Right ventricle myocardium superior (tissue), 1 donor: ENCODE measurements at regions of chr19 and their contacts with region 1.

Region 1: GRCh38 chr19:40055832-40056504 is at the start of gene ZNF780B:
- DNase-seq: peak; percentile 74
- ATAC-seq: peak; percentile 98
- total RNA-seq, gene ZNF780B: 26.0 TPM

Region 2: GRCh38 chr19:40006273-40006691 is 49.7 kb before region 1 on chr19:
- intact Hi-C with region 1: loop called (anchors 10 kb)
- DNase-seq: no peak
- ATAC-seq: no peak